Activated B cell treated with CpG ODN at 0.5 μM for 24 hours (primary cell): ENCODE measurements at regions of chr10 and their contacts with region 1.

Region 1: DNA sequence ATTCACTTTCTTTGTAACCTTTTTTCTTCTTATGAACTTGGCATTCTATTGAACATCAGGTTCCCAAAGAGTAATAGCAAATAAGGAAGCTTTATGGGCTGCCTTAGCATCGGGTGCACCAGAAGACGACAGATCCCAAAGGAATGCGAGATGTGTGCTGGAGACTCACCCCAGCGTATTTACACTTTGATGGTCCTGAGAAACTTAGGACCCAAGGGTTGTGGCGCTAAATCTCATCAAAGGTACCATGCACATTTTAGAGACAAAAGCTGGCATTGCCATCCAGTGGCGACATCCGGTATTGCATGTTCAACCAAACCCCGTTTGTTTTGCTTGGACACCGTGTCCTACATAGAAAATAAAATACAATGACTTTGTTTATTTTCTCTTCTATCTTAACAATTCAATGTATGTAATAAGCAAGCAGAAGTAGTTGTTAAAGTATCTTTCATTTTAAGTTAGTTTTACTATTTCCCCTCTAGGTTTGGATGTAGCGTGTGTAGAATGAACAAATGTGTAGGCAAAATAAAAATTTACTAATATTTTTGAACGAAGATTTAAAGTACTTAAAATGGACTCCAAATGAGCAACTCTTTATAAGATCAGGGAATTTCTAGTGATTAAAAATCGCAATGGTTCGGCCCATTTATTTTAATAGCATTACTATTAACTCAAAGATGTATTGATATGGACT is 1154.8 kb downstream of the GATA3 start:
- DNase-seq: peak; percentile 42
- ATAC-seq: no peak
- H3K4me3 Mint-ChIP-seq: no peak overlapping the region
- H3K27ac Mint-ChIP-seq: no peak overlapping the region
- H3K4me1 Mint-ChIP-seq: no peaks in the 10 kb centered on the region
- H3K27me3 Mint-ChIP-seq: peaks cover 4% of the 10 kb centered on the region
- CTCF ChIP-seq: peak; percentile 62

Region 2: GRCh38 chr10:7756360-7756992 is 1452.8 kb before region 1 on chr10:
- CTCF ChIA-PET with region 1: no interaction called
- POLR2A ChIA-PET with region 1: no interaction called
- intact Hi-C with region 1: loop called (anchors 5 kb)
- DNase-seq: no peak
- ATAC-seq: no peak
- H3K4me3 Mint-ChIP-seq: no peak overlapping the region
- H3K27ac Mint-ChIP-seq: no peak overlapping the region
- H3K4me1 Mint-ChIP-seq: no peaks in the 10 kb centered on the region
- H3K27me3 Mint-ChIP-seq: no peaks in the 10 kb centered on the region
- CTCF ChIP-seq: no peak

Region 3: GRCh38 chr10:7872041-7872442 is 1337.2 kb before region 1 on chr10:
- CTCF ChIA-PET with region 1: interaction called, 27 read pairs
- POLR2A ChIA-PET with region 1: no interaction called
- intact Hi-C with region 1: loop called (anchors 1 kb)
- DNase-seq: no peak
- ATAC-seq: no peak
- H3K4me3 Mint-ChIP-seq: peak overlapping the region; percentile 60
- H3K27ac Mint-ChIP-seq: no peak overlapping the region
- H3K4me1 Mint-ChIP-seq: peaks cover 10% of the 10 kb centered on the region
- H3K27me3 Mint-ChIP-seq: no peaks in the 10 kb centered on the region
- CTCF ChIP-seq: peak; percentile 85

Region 4: GRCh38 chr10:9051323-9051974 is 157.8 kb before region 1 on chr10:
- CTCF ChIA-PET with region 1: no interaction called
- POLR2A ChIA-PET with region 1: no interaction called
- intact Hi-C with region 1: no loop called
- DNase-seq: no peak
- ATAC-seq: no peak
- H3K4me3 Mint-ChIP-seq: no peak overlapping the region
- H3K27ac Mint-ChIP-seq: no peak overlapping the region
- H3K4me1 Mint-ChIP-seq: no peaks in the 10 kb centered on the region
- H3K27me3 Mint-ChIP-seq: no peaks in the 10 kb centered on the region
- CTCF ChIP-seq: no peak

Region 5: GRCh38 chr10:9342885-9343570 is 133.8 kb after region 1 on chr10:
- CTCF ChIA-PET with region 1: no interaction called
- POLR2A ChIA-PET with region 1: no interaction called
- intact Hi-C with region 1: no loop called
- DNase-seq: no peak
- ATAC-seq: no peak
- H3K4me3 Mint-ChIP-seq: no peak overlapping the region
- H3K27ac Mint-ChIP-seq: no peak overlapping the region
- H3K4me1 Mint-ChIP-seq: no peaks in the 10 kb centered on the region
- H3K27me3 Mint-ChIP-seq: no peaks in the 10 kb centered on the region
- CTCF ChIP-seq: no peak